HCT116 (cell line): ENCODE measurements at regions of chr1 and their contacts with region 1.

Region 1: GRCh38 chr1:245485996-245486395 is 331.2 kb downstream of the KIF26B start:
- DNase-seq: no peak
- ATAC-seq: no peak
- H3K4me3 ChIP-seq: no peak overlapping the region
- H3K27ac ChIP-seq: no peak overlapping the region
- H3K4me1 ChIP-seq: no peaks in the 10 kb centered on the region
- H3K27me3 ChIP-seq: peaks cover 9% of the 10 kb centered on the region; the same call in 1 of the 2 replicates
- CTCF ChIP-seq: no peak
- POLR2A ChIP-seq: no peak
- RAD21 ChIP-seq: no peak

Region 2: GRCh38 chr1:245411245-245412036 is 74.6 kb before region 1 on chr1:
- CTCF ChIA-PET with region 1: no interaction called
- POLR2A ChIA-PET with region 1: no interaction called
- RAD21 ChIA-PET with region 1: no interaction called
- intact Hi-C with region 1: no loop called
- DNase-seq: no peak
- ATAC-seq: no peak
- H3K4me3 ChIP-seq: no peak overlapping the region
- H3K27ac ChIP-seq: no peak overlapping the region
- H3K4me1 ChIP-seq: no peaks in the 10 kb centered on the region
- H3K27me3 ChIP-seq: 0 out of 2 replicates have a peak, but pooled peaks cover 4% of the 10 kb centered on the region
- CTCF ChIP-seq: no peak
- POLR2A ChIP-seq: no peak
- RAD21 ChIP-seq: no peak

Region 3: DNA sequence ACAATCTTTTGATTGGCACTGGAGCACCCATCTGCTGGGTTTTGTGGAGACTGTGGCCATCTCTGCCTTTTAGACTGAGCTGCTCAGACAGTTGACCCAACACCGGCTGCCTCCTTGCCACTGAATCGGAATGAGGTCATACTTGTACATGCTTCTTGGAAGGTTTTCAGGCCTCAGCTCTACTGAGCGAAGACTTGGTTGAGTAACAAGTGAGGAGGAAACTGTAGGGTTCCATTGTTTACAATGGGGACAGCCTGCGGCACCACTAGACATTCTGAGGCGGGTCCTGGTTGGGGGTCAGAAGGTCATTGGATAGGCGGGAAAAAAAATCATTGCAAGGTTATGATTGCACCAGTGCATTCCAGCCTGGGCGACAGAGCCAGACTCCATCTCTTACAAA is 10.8 kb before region 1 on chr1:
- CTCF ChIA-PET with region 1: no interaction called
- POLR2A ChIA-PET with region 1: no interaction called
- RAD21 ChIA-PET with region 1: no interaction called
- intact Hi-C with region 1: loop called (anchors 1 kb)
- DNase-seq: no peak
- ATAC-seq: no peak
- H3K4me3 ChIP-seq: no peak overlapping the region
- H3K27ac ChIP-seq: no peak overlapping the region
- H3K4me1 ChIP-seq: no peaks in the 10 kb centered on the region
- H3K27me3 ChIP-seq: no peaks in the 10 kb centered on the region
- CTCF ChIP-seq: no peak
- POLR2A ChIP-seq: no peak
- RAD21 ChIP-seq: no peak